Activated CD8-positive, alpha-beta T cell treated with anti-CD3 and anti-CD28 coated beads, Interleukin-2, amount 10 ng/mL, durations not matched to agents 7 days and 5 days (primary cell): ENCODE measurements at regions of chr10 and their contacts with region 1.

Region 1: GRCh38 chr10:72308320-72308987 is 34.7 kb downstream of the DDIT4 start:
- DNase-seq: peak; percentile 53
- ATAC-seq: peak; percentile 53
- H3K4me3 Mint-ChIP-seq: no peak overlapping the region
- H3K27ac Mint-ChIP-seq: peak overlapping the region; percentile 80
- H3K4me1 Mint-ChIP-seq: peaks cover 76% of the 10 kb centered on the region
- H3K27me3 Mint-ChIP-seq: no peaks in the 10 kb centered on the region

Region 2: GRCh38 chr10:72319416-72320254 is 11.2 kb after region 1 on chr10:
- CTCF ChIA-PET with region 1: interaction called, 8 read pairs
- POLR2A ChIA-PET with region 1: interaction called, 45 read pairs
- DNase-seq: peak; percentile 92
- ATAC-seq: peak; percentile 78
- H3K4me3 Mint-ChIP-seq: peak overlapping the region; percentile 81
- H3K27ac Mint-ChIP-seq: peak overlapping the region; percentile 99
- H3K4me1 Mint-ChIP-seq: peaks cover 88% of the 10 kb centered on the region
- H3K27me3 Mint-ChIP-seq: no peaks in the 10 kb centered on the region